Endothelial cell of umbilical vein (primary cell): ENCODE measurements at regions of chr16 and their contacts with region 1.

Region 1: DNA sequence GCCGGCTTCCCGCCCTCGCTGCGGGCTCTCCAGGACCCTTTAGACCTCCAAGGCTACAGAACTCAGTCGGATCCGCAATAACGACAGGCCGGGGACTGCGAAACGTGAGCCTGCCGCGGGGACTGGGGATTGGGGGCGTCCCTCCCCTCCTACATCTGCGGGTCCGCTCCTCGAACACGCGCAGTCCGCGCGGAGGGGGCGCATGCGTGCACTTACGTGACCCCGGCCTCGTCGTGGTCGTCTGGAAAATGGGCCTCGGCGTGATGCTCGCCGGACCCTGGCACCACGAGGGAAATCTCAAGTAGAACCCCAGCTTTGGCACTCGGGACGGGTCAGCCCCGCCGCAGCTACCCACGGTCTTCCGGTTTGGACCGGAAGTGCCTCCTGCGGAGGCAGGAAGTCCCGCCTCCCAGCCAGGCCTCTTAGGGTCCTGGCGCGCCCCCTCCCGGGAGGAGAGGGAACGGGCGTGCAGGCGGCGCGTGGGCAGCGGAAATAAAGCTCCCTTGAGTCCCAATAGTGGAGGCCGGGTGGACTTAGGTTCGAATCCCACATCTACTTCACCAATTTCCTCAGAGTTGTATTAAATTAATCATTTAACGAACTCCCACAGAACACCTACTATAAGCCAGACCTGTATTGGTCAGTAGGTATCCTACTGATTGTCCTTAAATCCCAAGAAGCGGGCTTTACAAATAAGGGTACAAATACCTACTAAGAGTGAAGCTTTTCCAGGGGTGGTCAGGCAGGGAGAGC is at the start of gene TAF1C:
- DNase-seq: peak; percentile 94
- H3K4me3 ChIP-seq: peak within 1 kb of the TSS; percentile 76 to 95 (median 86)
- H3K27ac ChIP-seq: peak within 1 kb of the TSS; percentile 35
- H3K4me1 ChIP-seq: peaks cover 17% of the 10 kb centered on the region
- H3K27me3 ChIP-seq: no peaks in the 10 kb centered on the region
- CTCF ChIP-seq: peak; percentile 98 to 99
- POLR2A ChIP-seq: peak; percentile 61
- total RNA-seq, gene TAF1C: 57.2 and 62.3 TPM in 2 replicates

Region 2: DNA sequence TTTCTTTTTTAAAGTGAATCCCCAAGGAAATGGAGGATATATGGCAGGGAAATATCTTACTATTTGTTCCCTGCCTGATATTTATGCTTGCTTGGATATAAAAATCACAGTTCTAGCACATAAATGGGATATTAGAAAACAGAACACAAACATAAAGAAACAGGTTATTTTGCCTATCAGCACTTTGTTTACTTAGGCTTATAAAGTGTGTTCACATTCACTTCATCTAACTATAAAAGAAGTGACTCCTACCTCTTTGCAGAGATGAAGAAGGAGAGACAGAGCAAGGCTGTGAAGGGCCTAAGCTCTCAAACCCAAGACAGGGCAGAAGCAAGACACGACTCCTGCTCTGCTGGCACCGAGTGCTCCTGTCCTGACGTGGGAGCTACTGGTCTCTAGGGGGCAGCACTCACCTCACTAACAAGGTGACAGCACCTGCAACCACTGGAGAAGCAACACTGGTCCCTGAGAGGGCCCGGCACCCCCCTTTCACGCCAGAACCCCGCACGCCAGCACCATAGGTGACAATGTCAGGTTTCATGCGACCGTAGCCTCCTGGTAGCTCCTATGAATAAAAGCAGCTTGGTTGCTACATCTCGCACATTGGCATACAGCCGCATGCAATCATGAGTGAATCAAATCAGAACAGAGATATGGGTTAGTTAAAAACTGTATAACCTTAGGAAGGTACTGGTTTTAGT is 102.1 kb before region 1 on chr16:
- CTCF ChIA-PET with region 1: interaction called, 21 read pairs
- POLR2A ChIA-PET with region 1: no interaction called
- dilution Hi-C with region 1: no loop called
- intact Hi-C with region 1: loop called (anchors 1 kb)
- DNase-seq: peak; percentile 66
- H3K4me3 ChIP-seq: no peak overlapping the region
- H3K27ac ChIP-seq: no peak overlapping the region
- H3K4me1 ChIP-seq: no peaks in the 10 kb centered on the region
- H3K27me3 ChIP-seq: no peaks in the 10 kb centered on the region
- CTCF ChIP-seq: peak; percentile 71 to 87
- POLR2A ChIP-seq: no peak

Region 3: DNA sequence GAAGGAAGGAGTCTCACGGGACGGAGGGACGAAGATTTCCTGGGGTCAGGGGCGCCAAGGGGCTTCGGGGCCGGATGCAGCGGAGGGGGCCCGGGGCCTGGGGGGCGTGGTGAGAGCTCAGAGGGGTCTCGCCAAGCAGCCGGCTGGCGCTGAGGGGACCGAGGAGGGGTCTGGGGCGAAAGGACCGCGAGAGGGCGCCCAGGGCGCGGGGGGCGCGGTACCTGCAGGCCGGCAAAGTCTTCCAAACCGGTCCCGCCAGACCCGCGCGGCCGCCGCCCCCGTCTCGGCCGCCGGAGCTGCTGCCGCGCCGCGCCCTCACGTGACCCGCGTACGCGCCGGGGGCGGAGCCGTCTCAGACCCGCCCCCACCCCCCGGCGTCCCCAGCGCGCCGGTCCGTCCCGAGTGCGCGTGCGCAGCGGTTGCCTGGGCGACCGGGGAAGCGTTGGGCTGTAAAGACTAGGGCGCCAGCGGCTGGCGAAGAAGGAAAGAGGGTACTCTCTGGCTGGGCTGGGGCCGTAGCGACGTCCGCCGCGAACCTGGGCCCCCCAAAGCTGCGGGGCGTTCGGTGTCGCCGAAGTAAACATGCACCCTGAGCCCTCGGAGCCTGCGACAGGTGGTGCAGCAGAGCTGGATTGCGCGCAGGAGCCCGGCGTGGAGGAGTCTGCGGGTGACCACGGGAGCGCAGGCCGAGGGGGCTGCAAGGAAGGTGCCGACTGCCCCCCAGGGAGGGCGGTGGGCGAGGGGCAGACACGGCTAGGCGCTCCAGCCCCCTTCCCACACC is 41.8 kb before region 1 on chr16 and contains the starts of genes DNAAF1 and HSDL1:
- CTCF ChIA-PET with region 1: interaction called, 12 read pairs
- POLR2A ChIA-PET with region 1: no interaction called
- dilution Hi-C with region 1: no loop called
- intact Hi-C with region 1: loop called (anchors 2 kb)
- DNase-seq: peak; percentile 88
- H3K4me3 ChIP-seq: peak within 1 kb of the TSS; percentile 65 to 91 (median 85)
- H3K27ac ChIP-seq: peak within 1 kb of the TSS; percentile 34
- H3K4me1 ChIP-seq: peaks cover 5% of the 10 kb centered on the region
- H3K27me3 ChIP-seq: peaks cover 0 to 4% of the 10 kb centered on the region in 2 experiments
- CTCF ChIP-seq: no peak
- POLR2A ChIP-seq: no peak
- total RNA-seq, gene DNAAF1: not detected in 2 replicates
- total RNA-seq, gene HSDL1: 26.1 and 27.9 TPM in 2 replicates

Region 4: GRCh38 chr16:84169765-84170310 is 17.0 kb before region 1 on chr16:
- CTCF ChIA-PET with region 1: interaction called, 24 read pairs
- POLR2A ChIA-PET with region 1: no interaction called
- dilution Hi-C with region 1: no loop called
- intact Hi-C with region 1: no loop called
- DNase-seq: no peak
- H3K4me3 ChIP-seq: no peak overlapping the region
- H3K27ac ChIP-seq: no peak overlapping the region
- H3K4me1 ChIP-seq: no peaks in the 10 kb centered on the region
- H3K27me3 ChIP-seq: peaks cover 1 to 3% of the 10 kb centered on the region in 2 experiments
- CTCF ChIP-seq: no peak
- POLR2A ChIP-seq: no peak

Region 5: DNA sequence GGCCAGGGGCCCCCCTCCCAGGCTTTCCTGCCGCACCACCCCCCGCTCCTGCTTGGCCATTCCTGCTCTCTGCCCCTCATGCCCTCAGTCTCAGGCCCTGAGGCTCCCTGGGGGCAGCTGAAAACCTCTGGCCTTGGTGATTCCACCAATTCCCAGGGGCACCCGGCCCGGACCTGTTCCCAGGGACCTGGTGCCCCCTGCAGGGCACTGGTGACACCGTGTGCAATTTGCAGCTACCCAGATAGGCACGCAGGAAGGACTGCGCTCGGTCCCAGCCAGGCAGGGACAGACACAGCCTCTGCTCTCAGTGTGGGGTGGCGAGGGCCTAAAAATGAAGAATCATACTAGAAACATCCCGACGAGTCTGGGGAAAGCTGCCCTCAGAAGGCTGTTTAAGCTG is 121.3 kb after region 1 on chr16:
- CTCF ChIA-PET with region 1: interaction called, 10 read pairs
- POLR2A ChIA-PET with region 1: no interaction called
- dilution Hi-C with region 1: no loop called
- intact Hi-C with region 1: no loop called
- DNase-seq: peak; percentile 15
- H3K4me3 ChIP-seq: no peak overlapping the region
- H3K27ac ChIP-seq: no peak overlapping the region
- H3K4me1 ChIP-seq: no peaks in the 10 kb centered on the region
- H3K27me3 ChIP-seq: peaks cover 14 to 23% of the 10 kb centered on the region in 2 experiments
- CTCF ChIP-seq: peak; percentile 32 to 58
- POLR2A ChIP-seq: no peak